ENCODE measurements at regions of chr2 and their contacts with region 1.

Region 1: DNA sequence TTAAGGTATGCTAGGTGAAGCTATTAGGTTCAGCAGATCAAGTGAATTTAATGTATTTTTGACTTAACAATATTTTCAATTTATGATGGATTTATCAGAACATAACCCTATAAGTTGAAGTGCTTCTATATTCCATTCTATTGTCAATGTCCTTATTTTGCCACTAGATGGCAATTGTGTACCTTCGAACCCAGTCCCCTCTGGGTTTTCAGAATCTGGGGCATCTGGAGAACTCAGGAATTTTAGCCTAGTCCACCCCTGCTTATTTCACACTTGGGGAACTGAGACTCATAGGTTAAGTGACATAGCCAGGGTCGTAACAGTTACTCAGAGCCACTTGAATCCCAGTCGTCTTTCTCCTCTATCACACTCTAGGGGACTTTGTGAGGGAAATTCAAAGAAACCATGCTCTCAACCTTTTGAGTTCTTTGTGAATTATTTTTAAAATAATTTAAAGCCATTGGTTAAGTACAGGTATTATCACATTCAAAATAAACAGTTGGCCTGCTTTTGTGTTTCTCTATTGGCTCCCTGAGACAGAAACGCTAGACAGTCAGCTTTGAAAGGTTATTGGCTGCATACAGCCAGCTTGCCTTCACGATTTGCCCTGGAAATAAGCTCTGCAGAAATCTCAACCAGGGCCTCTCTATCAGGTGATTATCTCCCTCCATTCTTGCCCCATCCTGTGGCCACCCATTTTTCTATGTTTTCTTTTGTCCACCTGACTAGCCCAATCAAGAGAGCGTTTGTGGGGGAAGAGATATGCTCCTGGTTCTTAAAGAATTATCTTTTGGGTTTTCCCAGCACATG is 145.0 kb downstream of the TTC27 start:
- DNase-seq: no peak
- ATAC-seq: peak; percentile 71
- H3K4me3 ChIP-seq: no peak overlapping the region
- H3K27ac ChIP-seq: no peak overlapping the region
- H3K4me1 ChIP-seq: no peaks in the 10 kb centered on the region
- H3K27me3 ChIP-seq: no peaks in the 10 kb centered on the region
- CTCF ChIP-seq: peak; percentile 36 to 68 (median 55); a peak in 5 of 6 replicates
- EP300 ChIP-seq: no peak
- POLR2A ChIP-seq: no peak
- RAD21 ChIP-seq: peak; percentile 92

Region 2: DNA sequence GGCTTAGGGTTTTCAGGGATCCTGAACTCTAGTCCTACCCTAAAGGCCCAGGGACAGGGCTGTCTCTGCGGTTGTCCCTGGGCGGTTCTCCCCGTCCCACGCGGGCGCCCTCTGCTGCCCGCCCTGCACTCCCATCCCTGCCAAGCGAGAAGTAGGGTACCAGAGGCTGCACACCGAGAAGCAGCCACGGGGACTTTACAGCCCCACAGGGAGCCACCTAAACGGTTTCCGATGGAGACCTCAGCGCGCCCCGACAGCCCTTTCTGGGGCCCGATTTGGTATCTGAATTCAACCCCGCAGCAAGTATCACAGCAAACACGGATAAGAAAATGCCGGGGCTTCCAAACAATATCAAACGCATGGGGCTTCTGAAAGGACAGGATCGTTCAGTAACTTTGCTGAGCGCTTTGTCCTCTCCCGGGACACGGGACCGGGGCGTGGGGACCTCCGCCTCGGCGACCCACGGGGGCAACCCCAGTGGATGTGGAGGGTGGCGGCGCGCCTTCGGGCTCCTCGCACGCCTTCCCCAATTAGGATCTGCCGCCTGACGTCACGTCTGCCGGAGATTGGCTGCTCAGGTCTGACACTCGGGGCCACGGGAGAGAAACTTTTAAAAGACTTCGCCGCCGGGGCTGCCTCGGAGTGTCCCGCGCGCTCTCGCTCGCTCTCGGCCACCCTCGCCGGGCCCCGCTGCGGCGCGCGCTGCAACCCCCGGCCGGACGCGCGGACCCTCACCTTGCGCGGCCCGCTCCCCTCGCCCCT is 173.7 kb after region 1 on chr2 and contains the start of gene LTBP1:
- CTCF ChIA-PET with region 1: no interaction called
- POLR2A ChIA-PET with region 1: no interaction called
- RAD21 ChIA-PET with region 1: no interaction called
- SMC1A ChIA-PET with region 1: no interaction called
- in situ Hi-C with region 1: loop called (anchors 10 kb)
- intact Hi-C with region 1: loop called (anchors 1 kb)
- DNase-seq: no peak
- ATAC-seq: peak; percentile 94
- H3K4me3 ChIP-seq: peak within 1 kb of the TSS; percentile 65
- H3K27ac ChIP-seq: no peak within 1 kb of the TSS
- H3K4me1 ChIP-seq: peaks cover 4% of the 10 kb centered on the region; the same call in 1 of the 2 replicates
- H3K27me3 ChIP-seq: peaks cover 0 to 6% of the 10 kb centered on the region in 2 experiments
- CTCF ChIP-seq: peak; percentile 64 to 81 (median 73)
- EP300 ChIP-seq: no peak
- POLR2A ChIP-seq: no peak
- RAD21 ChIP-seq: peak; percentile 60
- polyA plus RNA-seq, gene LTBP1: not detected

Region 3: GRCh38 chr2:33275689-33276444 is 503.0 kb after region 1 on chr2:
- CTCF ChIA-PET with region 1: no interaction called
- POLR2A ChIA-PET with region 1: no interaction called
- RAD21 ChIA-PET with region 1: no interaction called
- SMC1A ChIA-PET with region 1: no interaction called
- in situ Hi-C with region 1: no loop called
- intact Hi-C with region 1: loop called (anchors 2 kb)
- DNase-seq: no peak
- ATAC-seq: no peak
- H3K4me3 ChIP-seq: no peak overlapping the region
- H3K27ac ChIP-seq: no peak overlapping the region
- H3K4me1 ChIP-seq: peaks cover 10% of the 10 kb centered on the region
- H3K27me3 ChIP-seq: 0 out of 4 replicates have a peak, but pooled peaks cover 0 to 2% of the 10 kb centered on the region in 2 experiments
- CTCF ChIP-seq: no peak
- EP300 ChIP-seq: no peak
- POLR2A ChIP-seq: no peak
- RAD21 ChIP-seq: no peak

Region 4: DNA sequence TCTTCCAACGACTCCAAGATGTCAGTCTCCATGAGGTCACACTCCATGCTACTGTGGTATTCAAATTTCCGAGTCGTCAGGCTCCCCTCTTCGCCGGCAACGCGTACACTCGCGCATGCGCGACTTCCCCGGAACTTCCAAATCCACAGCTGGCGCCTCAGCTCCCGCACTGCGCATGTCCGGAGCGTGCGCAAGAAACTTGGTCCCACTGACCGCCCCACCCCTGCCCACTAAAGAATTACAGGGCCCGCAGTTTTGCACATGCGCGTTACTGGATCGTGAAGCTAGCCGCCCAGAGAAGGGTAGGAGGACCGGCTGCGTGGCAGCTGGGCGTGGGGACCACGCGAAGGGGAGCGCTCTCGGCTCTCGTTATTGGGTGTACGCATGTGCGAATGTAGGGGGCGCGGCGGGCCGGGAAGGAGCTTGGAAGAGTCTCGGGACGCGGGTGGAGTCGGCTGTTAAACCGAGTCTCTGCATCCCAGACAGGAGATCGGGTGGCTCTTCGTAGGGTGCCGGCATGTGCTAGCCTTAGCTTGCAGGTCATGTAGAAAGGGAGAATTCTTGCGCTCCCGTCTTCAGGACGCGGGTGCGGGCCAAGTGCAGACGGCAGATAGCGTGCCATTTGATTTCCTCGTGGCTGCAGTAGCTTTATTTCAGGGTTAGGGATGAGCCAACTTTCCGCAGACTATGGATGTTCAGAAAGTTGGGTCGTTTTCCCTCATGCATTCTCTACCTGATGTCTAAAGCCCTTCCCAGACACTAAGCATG is 826.5 kb after region 1 on chr2 and contains the start of gene FAM98A:
- CTCF ChIA-PET with region 1: no interaction called
- POLR2A ChIA-PET with region 1: no interaction called
- RAD21 ChIA-PET with region 1: no interaction called
- SMC1A ChIA-PET with region 1: no interaction called
- in situ Hi-C with region 1: loop called (anchors 25 kb)
- intact Hi-C with region 1: no loop called
- DNase-seq: peak; percentile 96
- ATAC-seq: peak; percentile 92
- H3K4me3 ChIP-seq: peak within 1 kb of the TSS; percentile 94
- H3K27ac ChIP-seq: peak within 1 kb of the TSS; percentile 96
- H3K4me1 ChIP-seq: no peaks in the 10 kb centered on the region
- H3K27me3 ChIP-seq: no peaks in the 10 kb centered on the region
- CTCF ChIP-seq: peak in 2 of 3 experiments; percentile 1 to 10; a peak in 1 of 6 replicates
- EP300 ChIP-seq: 0 out of 4 replicates have a peak, but pooled peaks of 1 of the 2 experiments have one; percentile 14
- POLR2A ChIP-seq: peak; percentile 75
- RAD21 ChIP-seq: no peak
- polyA plus RNA-seq, gene FAM98A: 34.4 to 55.6 TPM